Activated CD4-positive, alpha-beta memory T cell treated with anti-CD3 and anti-CD28 coated beads for 36 hours (primary cell): ENCODE measurements at regions of chr11 and their contacts with region 1.

Region 1: DNA sequence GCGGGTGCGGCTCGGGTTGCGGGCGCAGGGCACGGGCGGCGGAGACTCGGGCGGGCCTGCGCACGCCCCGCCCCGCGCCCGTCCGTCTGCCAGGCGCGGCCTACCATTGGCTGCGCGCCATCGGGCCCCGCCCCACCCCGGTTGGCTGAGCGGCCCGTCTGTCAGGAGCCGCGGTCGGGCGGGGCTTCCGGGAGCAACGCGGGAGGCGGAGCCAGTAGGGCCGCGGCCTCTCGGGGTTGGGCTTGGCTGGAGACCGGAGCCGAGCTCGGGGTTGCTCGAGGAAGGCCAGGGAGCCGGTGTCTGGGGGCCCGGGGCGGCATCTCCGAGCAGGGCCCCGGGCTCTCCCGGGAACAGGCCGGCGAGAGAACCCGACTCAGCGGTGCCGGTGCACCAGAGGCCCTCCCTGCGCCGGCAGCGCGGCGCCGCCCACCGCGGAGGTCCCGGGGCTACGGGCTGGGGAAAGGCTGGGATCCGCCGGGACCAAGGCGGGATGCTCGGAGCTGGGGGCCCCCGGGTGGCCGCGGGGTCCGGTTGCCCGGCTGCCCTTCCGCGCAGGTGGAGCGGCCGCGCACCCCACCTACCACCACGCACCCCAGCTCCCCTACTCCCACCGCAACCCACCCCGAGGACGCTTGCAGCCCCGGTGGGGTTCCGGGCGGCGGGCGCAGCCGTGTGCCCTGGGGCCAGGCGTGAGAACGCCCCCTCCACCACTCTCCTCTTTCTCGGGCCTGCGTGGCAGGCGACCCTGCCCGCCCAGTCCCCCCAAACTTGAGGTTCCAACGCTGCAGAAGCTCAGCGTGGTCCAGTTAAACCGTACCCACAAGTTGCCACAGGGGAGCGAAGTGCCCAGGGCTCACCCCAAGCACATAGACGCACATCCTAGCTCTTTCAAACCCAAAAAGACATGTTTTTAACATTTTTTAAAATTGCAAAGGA is at the start of gene HRAS:
- DNase-seq: peak; percentile 95
- H3K4me3 Mint-ChIP-seq: peak within 1 kb of the TSS; percentile 85
- H3K27ac Mint-ChIP-seq: peak within 1 kb of the TSS; percentile 78
- H3K4me1 Mint-ChIP-seq: peaks cover 9% of the 10 kb centered on the region
- H3K27me3 Mint-ChIP-seq: no peaks in the 10 kb centered on the region
- total RNA-seq, gene HRAS: 39.8 to 42.0 TPM

Region 2: GRCh38 chr11:518463-519250 is 17.1 kb before region 1 on chr11:
- CTCF ChIA-PET with region 1: interaction called, 30 read pairs
- POLR2A ChIA-PET with region 1: interaction called, 6 read pairs
- intact Hi-C with region 1: no loop called
- DNase-seq: peak; percentile 93
- H3K4me3 Mint-ChIP-seq: peak overlapping the region; percentile 78
- H3K27ac Mint-ChIP-seq: peak overlapping the region; percentile 44
- H3K4me1 Mint-ChIP-seq: peaks cover 8% of the 10 kb centered on the region
- H3K27me3 Mint-ChIP-seq: no peaks in the 10 kb centered on the region

Region 3: DNA sequence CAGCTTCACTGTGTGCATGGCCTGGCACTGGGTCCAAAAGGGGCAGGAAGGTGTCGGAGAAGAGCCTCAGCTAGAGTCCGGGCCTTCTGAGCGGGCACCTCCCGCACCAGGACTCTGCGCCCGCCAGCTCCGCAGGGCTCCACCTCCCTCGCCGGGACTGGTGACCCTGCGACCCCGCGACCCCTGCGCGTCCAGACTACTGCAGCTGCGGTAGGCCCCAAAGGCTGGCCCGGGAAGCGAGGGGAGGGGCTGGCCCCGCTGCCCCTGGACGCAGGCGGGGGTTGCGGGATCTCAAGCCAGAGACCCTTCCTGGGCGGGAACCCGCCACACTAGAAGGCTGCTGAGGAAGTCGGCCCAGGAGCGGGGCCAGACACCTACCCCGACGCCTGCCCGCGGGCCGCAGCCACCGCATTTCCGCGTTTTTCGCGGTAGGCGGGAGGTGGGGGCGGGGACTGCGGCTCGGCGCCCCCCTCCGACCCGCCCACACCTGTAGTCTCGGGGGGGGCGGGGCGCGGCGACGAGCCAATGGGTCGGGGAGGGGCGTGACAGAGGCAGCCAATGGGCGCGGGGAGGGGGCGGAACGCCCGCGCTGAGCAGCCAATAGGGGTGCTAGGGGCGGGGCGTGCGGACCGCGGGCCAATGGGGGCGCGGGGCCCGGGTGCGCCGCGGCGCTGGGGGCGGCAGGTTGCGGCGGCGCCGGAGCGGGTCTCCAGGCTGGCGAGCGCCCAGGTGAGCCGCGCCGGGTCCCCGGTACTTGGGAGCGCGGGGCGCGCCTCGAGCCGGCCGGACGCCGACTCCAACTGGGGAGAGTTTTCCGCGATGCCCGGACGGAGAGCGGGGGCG is 24.7 kb after region 1 on chr11 and contains the starts of genes LMNTD2 and RASSF7:
- CTCF ChIA-PET with region 1: interaction called, 8 read pairs
- POLR2A ChIA-PET with region 1: interaction called, 4 read pairs
- intact Hi-C with region 1: loop called (anchors 2 kb)
- DNase-seq: peak; percentile 96
- H3K4me3 Mint-ChIP-seq: peak within 1 kb of the TSS; percentile 90
- H3K27ac Mint-ChIP-seq: peak within 1 kb of the TSS; percentile 67
- H3K4me1 Mint-ChIP-seq: peaks cover 14% of the 10 kb centered on the region
- H3K27me3 Mint-ChIP-seq: peaks cover 5% of the 10 kb centered on the region
- total RNA-seq, gene LMNTD2: 3.1 to 3.9 TPM
- total RNA-seq, gene RASSF7: 18.8 to 21.9 TPM

Region 4: GRCh38 chr11:568306-569157 is 32.7 kb after region 1 on chr11:
- CTCF ChIA-PET with region 1: no interaction called
- POLR2A ChIA-PET with region 1: no interaction called
- intact Hi-C with region 1: loop called (anchors 2 kb)
- DNase-seq: peak; percentile 95
- H3K4me3 Mint-ChIP-seq: peak overlapping the region; percentile 75
- H3K27ac Mint-ChIP-seq: peak overlapping the region; percentile 58
- H3K4me1 Mint-ChIP-seq: peaks cover 5% of the 10 kb centered on the region
- H3K27me3 Mint-ChIP-seq: no peaks in the 10 kb centered on the region

Region 5: GRCh38 chr11:575996-576768 is 40.4 kb after region 1 on chr11 and contains the start of gene PHRF1:
- CTCF ChIA-PET with region 1: interaction called, 5 read pairs
- POLR2A ChIA-PET with region 1: interaction called, 4 read pairs
- intact Hi-C with region 1: loop called (anchors 2 kb)
- DNase-seq: peak; percentile 95
- H3K4me3 Mint-ChIP-seq: peak within 1 kb of the TSS; percentile 87
- H3K27ac Mint-ChIP-seq: peak within 1 kb of the TSS; percentile 98
- H3K4me1 Mint-ChIP-seq: peaks cover 45% of the 10 kb centered on the region
- H3K27me3 Mint-ChIP-seq: peaks cover 5% of the 10 kb centered on the region
- total RNA-seq, gene PHRF1: 32.4 to 33.5 TPM

Region 6: GRCh38 chr11:695538-696248 is 159.9 kb after region 1 on chr11 and contains the start of gene TMEM80:
- CTCF ChIA-PET with region 1: no interaction called
- POLR2A ChIA-PET with region 1: interaction called, 6 read pairs
- intact Hi-C with region 1: loop called (anchors 5 kb)
- DNase-seq: peak; percentile 99
- H3K4me3 Mint-ChIP-seq: peak within 1 kb of the TSS; percentile 85
- H3K27ac Mint-ChIP-seq: peak within 1 kb of the TSS; percentile 93
- H3K4me1 Mint-ChIP-seq: peaks cover 49% of the 10 kb centered on the region
- H3K27me3 Mint-ChIP-seq: no peaks in the 10 kb centered on the region
- total RNA-seq, gene TMEM80: 9.5 to 9.8 TPM